ENCODE measurements at regions of chr4 and their contacts with region 1.

Region 1: DNA sequence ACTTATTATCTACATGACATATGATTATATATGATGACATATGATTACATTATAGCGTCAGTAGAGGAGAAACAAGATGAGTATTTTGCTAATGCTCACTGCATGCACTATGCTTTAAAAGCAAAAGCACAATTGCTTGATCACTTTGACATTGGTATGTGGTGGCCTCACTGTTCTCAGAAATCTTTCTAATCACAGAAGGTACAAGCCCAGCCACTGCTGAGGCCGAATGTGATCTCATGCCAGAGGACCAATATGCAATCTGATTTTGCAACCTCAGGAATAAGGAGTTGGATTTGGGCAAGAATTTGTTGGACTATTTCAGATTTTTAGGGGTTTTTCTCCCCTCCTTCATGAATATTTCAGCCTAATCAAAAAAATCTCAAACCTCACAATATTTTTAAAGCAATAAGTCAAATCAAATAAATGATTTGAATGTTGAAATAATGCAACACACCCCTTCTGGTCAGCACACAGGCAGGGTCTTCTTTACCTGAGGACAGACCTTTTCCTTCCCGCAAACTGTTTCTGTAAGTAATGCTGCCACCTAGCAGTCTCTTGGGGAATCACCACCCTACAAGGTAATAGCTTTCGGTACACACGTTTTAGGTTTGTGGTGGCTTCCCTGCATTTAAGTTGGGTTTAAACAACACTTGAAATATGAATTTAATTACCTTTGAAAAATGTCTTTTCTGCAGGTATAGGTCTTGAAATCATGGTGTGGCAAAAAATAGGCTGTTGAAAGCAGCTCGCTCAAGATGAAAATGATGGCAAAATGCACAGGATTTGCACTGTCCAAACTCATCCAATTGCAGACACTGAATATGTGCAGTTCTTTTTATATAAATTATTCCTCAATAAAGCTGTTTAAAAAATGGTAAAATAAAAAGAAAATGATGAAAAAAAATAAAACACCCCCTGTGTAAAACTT is 4.8 kb upstream of the CXCL13 start:
- DNase-seq: peak; percentile 56
- H3K4me3 Mint-ChIP-seq: no peak overlapping the region
- H3K27ac Mint-ChIP-seq: peak overlapping the region; percentile 29
- H3K4me1 Mint-ChIP-seq: peaks cover 23% of the 10 kb centered on the region
- H3K27me3 Mint-ChIP-seq: no peaks in the 10 kb centered on the region
- CTCF ChIP-seq: peak; percentile 83

Region 2: DNA sequence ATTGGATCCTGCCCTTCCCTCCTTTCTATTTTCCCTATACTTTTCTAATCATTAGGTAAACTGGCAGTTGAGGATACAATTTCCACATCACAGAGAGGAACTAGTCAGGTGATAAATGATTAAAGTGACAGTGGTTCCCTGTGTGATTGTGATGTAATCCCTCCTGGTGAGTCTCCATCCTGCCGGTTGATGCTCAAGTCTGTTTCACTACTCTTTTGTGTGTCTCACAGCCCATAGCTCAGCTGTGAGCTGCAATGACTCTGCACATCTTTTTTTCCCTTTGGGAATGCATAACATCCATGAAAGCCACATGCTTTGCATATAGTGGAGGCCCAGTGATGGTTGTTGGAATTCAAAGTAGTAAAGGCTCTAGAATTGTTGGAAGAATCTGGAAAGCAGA is 585.4 kb before region 1 on chr4:
- CTCF ChIA-PET with region 1: no interaction called
- POLR2A ChIA-PET with region 1: no interaction called
- intact Hi-C with region 1: no loop called
- DNase-seq: no peak
- H3K4me3 Mint-ChIP-seq: no peak overlapping the region
- H3K27ac Mint-ChIP-seq: no peak overlapping the region
- H3K4me1 Mint-ChIP-seq: peaks cover 10% of the 10 kb centered on the region
- H3K27me3 Mint-ChIP-seq: no peaks in the 10 kb centered on the region
- CTCF ChIP-seq: no peak

Region 3: DNA sequence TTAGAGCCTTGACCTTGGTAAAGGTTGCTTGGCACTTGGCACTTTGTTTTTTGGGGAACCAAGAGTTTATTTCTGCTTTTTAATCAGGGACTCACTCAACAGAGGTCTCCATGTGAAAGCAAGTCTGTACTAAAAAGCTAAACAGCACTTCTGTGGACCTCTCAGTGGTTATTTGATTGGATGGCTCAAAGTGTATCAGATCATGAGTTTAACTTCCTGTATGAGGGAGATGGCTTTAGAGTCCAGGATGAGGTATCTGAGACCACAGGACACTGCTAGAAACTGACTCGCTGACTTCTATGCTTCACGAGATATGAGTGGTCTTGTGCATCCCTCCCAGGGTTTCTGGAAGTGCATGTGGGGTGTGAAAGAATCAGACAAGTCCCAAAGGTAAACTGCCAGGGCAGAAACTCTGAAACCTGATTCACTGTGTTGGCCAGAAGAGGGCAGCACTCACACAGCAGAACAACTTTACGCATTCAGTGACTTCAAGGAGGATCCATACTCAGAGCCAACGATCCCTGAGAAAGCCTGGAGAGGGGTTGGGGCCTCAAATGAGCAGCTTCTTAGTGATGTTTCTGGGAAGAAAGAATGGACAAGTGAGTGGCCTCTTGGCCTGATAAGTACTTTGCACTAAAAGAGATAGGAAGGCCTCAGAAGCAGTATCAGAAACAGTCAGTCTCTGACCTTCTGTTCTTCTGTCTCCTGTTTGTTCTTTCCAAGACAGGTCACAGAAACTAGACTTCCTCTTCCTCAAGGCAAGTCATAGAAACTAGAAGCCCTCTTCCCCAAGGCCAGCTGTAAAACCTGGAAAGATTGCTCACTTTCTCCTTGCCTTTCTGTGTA is 215.4 kb before region 1 on chr4:
- CTCF ChIA-PET with region 1: interaction called, 219 read pairs
- POLR2A ChIA-PET with region 1: interaction called, 3 read pairs
- intact Hi-C with region 1: loop called (anchors 1 kb)
- DNase-seq: peak; percentile 77
- H3K4me3 Mint-ChIP-seq: no peak overlapping the region
- H3K27ac Mint-ChIP-seq: no peak overlapping the region
- H3K4me1 Mint-ChIP-seq: no peaks in the 10 kb centered on the region
- H3K27me3 Mint-ChIP-seq: peaks cover 11% of the 10 kb centered on the region
- CTCF ChIP-seq: peak; percentile 74

Region 4: DNA sequence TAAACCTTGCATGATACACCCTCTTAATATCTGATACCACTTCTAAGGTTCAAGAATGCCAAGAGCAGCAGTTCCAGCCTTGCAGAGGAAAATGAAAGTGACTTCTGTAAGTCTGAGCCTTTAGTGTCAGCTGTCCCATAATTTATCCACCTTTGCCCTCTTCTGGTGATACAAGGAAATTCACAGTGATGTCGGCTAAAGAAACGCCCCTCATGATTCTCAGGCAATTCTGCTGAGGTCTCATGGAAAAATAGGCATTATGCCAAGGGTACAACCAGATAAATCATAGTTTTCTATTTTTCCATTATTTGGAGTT is 167.4 kb before region 1 on chr4:
- CTCF ChIA-PET with region 1: interaction called, 74 read pairs
- POLR2A ChIA-PET with region 1: no interaction called
- intact Hi-C with region 1: no loop called
- DNase-seq: peak; percentile 72
- H3K4me3 Mint-ChIP-seq: no peak overlapping the region
- H3K27ac Mint-ChIP-seq: no peak overlapping the region
- H3K4me1 Mint-ChIP-seq: no peaks in the 10 kb centered on the region
- H3K27me3 Mint-ChIP-seq: no peaks in the 10 kb centered on the region
- CTCF ChIP-seq: peak; percentile 64

Region 5: DNA sequence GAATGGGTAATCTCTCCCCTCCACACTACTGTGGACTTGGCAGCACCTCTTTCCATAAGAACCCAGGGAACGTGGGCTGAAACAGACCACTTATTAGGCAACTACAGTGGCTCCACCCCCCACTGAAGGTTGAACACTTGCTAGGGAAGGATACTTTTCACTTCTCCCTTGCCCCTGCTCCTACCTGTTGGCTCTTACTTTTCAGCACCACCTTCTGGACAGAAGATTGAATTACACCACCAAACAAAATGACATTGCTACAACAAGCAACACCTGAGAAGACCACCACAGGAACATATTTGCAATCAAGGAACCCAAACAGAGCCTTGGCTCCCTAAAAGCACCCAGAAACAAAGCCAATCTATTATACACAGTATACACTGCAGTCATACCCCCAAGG is 127.3 kb before region 1 on chr4:
- CTCF ChIA-PET with region 1: interaction called, 143 read pairs
- POLR2A ChIA-PET with region 1: interaction called, 5 read pairs
- intact Hi-C with region 1: loop called (anchors 2 kb)
- DNase-seq: peak; percentile 51
- H3K4me3 Mint-ChIP-seq: no peak overlapping the region
- H3K27ac Mint-ChIP-seq: no peak overlapping the region
- H3K4me1 Mint-ChIP-seq: peaks cover 6% of the 10 kb centered on the region
- H3K27me3 Mint-ChIP-seq: no peaks in the 10 kb centered on the region
- CTCF ChIP-seq: peak; percentile 58

Region 6: DNA sequence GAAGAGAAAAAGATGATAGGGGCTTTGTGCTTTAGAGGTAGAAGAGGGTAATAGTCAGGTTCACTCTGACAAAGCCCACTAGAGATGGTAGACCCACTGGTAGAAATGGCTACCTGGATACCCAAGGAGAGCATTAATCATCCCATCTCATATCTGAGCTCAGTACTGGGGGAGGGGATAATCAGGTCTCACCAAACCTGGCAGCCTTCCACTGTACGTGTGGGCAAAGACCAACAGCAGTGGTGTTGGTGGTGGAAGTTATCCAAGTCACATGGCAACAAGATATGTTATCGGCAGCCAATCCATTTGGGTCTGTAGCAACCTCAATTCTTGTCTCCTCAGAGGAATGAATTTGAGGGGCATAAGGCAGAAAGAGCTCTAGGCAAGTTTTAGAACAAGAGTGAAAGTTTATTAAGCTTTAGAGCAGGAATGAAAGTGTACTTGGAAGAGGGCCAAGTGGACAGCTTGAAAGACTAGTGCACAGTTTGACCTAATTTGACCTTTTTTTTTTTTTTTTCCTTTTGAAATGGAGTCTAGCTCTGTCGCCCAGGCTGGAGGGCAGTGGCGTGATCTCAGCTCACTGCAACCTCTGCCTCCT is 62.1 kb before region 1 on chr4:
- CTCF ChIA-PET with region 1: interaction called, 14 read pairs
- POLR2A ChIA-PET with region 1: interaction called, 3 read pairs
- intact Hi-C with region 1: loop called (anchors 1 kb)
- DNase-seq: peak; percentile 77
- H3K4me3 Mint-ChIP-seq: peak overlapping the region; percentile 55
- H3K27ac Mint-ChIP-seq: peak overlapping the region; percentile 87
- H3K4me1 Mint-ChIP-seq: peaks cover 29% of the 10 kb centered on the region
- H3K27me3 Mint-ChIP-seq: peaks cover 31% of the 10 kb centered on the region
- CTCF ChIP-seq: no peak

Region 7: DNA sequence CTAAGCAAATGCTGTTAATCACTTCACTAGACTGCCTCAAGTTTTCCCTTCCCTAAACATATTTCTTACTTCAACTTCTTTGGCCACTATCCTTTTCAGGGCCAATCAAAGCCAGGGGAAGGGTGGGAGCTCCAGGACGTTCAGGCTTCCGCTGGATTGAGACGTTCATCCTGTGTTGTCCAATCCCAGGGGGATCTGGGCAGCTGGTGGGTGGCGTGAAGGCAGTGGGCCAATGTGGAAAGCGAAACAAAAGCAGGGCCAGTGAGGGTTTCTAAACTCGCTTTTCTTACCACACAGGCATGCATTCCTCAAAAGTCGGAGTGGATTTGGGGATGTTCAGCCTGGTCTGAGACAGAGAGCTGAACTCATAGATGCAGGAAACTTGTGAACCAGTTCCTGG is 12.5 kb after region 1 on chr4:
- CTCF ChIA-PET with region 1: interaction called, 51 read pairs
- POLR2A ChIA-PET with region 1: interaction called, 3 read pairs
- intact Hi-C with region 1: no loop called
- DNase-seq: no peak
- H3K4me3 Mint-ChIP-seq: no peak overlapping the region
- H3K27ac Mint-ChIP-seq: no peak overlapping the region
- H3K4me1 Mint-ChIP-seq: peaks cover 5% of the 10 kb centered on the region
- H3K27me3 Mint-ChIP-seq: peaks cover 13% of the 10 kb centered on the region
- CTCF ChIP-seq: no peak

Region 8: GRCh38 chr4:77697860-77698590 is 97.2 kb after region 1 on chr4:
- CTCF ChIA-PET with region 1: interaction called, 13 read pairs
- POLR2A ChIA-PET with region 1: no interaction called
- intact Hi-C with region 1: loop called (anchors 1 kb)
- DNase-seq: peak; percentile 73
- H3K4me3 Mint-ChIP-seq: no peak overlapping the region
- H3K27ac Mint-ChIP-seq: no peak overlapping the region
- H3K4me1 Mint-ChIP-seq: peaks cover 23% of the 10 kb centered on the region
- H3K27me3 Mint-ChIP-seq: no peaks in the 10 kb centered on the region
- CTCF ChIP-seq: peak; percentile 65

Region 9: DNA sequence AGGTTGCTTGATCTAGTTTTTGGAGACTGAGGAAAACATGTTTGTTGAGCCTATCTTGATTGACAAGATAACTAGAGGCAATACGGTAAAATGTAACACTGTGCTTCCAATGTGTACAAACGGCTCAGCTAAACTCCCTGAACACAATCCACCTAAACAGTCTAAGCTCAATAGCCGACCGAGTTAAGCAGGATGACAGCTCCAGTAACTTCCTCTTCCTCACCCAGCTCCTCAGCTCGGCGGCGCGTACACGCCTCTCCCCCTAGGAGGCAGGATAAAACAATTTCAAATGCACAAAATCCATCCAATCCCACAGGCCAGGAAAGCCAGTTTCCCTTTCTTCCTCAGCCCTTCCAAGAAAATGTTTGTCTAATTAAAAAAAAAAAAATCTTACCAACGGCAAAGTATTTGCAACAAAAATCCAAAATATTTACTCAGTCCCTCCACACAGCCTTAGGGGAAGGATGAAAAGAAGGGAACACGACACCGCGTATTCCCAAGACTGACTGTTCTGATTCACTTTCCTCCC is 217.4 kb after region 1 on chr4:
- CTCF ChIA-PET with region 1: no interaction called
- POLR2A ChIA-PET with region 1: no interaction called
- intact Hi-C with region 1: no loop called
- DNase-seq: peak; percentile 79
- H3K4me3 Mint-ChIP-seq: peak overlapping the region; percentile 93
- H3K27ac Mint-ChIP-seq: peak overlapping the region; percentile 70
- H3K4me1 Mint-ChIP-seq: peaks cover 43% of the 10 kb centered on the region
- H3K27me3 Mint-ChIP-seq: no peaks in the 10 kb centered on the region
- CTCF ChIP-seq: peak; percentile 49